ENCODE measurements at regions of chr5 and their contacts with region 1.

Region 1: DNA sequence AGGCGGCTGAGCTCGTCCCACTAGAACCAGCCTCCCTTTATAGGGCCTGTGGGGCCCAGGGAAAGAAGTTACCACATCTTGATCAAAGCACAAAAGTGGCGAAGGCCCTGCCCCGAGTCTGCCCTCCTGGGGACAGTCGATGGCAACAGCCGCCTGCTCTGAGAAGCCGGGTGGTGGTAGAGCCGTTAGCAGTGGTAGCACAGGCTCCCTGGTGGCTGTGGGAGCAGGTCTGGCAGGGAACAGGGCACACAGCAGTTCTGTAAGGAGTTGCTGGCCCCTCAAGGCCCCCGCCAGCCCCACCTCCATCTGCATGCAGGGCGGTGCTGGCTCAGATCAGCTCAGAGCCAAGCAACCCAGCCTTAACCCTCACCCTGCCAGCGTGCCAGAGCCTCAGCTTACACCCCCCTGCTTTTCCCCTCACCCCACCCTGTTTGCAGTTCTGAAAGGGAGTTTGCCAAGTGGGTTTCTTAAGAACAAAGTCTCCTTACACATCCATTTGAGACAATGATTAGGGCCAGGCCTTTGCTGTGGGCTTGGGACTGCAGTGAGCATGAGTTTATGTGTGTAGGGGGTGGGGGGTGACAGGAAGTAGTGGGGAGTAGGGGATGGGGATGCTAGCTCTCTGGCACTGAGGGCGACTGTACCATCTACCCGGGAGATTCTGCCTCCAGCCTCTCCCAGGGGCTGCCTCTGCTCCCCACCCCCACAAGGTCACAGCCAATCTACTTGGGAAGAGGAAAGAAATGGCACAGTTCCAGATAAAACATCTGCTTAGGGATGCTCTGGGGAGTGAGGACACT is 11.8 kb downstream of the ACSL6 start:
- DNase-seq: no peak
- ATAC-seq: no peak
- H3K4me3 ChIP-seq: no peak overlapping the region
- H3K27ac ChIP-seq: no peak overlapping the region
- H3K4me1 ChIP-seq: no peaks in the 10 kb centered on the region
- H3K27me3 ChIP-seq: no peaks in the 10 kb centered on the region
- CTCF ChIP-seq: no peak

Region 2: DNA sequence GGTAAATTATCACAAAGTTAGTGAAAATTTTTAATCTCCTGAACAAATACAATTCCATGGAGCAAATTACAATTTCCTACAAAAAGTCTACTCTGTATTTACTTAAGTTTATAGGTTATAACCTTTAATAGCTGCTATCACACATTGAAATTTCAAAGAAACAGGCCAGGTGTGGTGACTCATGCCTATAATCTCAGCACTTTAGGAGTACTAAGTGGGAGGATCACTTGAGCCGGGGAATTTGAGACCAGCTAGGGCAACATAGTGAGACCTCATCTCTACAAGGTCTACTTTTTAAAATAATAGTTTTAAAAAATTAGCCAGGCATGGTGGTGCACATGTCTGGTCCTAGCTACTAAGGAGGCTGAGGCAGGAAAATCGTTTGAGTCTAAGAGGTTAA is 884.9 kb before region 1 on chr5:
- intact Hi-C with region 1: no loop called
- DNase-seq: no peak
- ATAC-seq: peak; percentile 50
- H3K4me3 ChIP-seq: no peak overlapping the region
- H3K27ac ChIP-seq: no peak overlapping the region
- H3K4me1 ChIP-seq: peaks cover 0 to 3% of the 10 kb centered on the region in 2 donors
- H3K27me3 ChIP-seq: no peaks in the 10 kb centered on the region
- CTCF ChIP-seq: no peak

Region 3: DNA sequence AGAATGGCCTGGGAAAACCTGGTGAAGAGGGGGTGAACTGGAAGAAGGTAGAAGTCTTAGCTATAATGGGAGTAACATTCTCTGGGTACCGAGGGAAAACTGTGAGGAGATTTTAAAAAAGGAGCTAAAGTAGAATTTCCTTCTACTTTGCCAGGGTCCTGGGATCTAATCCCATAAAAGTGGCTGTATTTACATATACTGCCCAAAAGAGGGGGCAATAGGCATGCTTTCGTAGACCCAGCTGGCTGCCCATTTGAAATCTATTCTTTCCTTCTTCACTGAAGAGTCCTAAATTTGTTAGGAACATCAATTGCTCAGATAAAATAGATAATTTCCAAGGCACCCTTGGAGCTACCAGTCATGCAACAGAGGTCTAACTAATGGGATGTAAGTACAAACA is 576.6 kb before region 1 on chr5:
- intact Hi-C with region 1: loop called in 1 of 2 experiments (anchors 10 kb)
- DNase-seq: peak in 1 of 4 donors; percentile 5
- ATAC-seq: peak; percentile 68
- H3K4me3 ChIP-seq: no peak overlapping the region
- H3K27ac ChIP-seq: no peak overlapping the region
- H3K4me1 ChIP-seq: peaks cover 0 to 4% of the 10 kb centered on the region in 2 donors
- H3K27me3 ChIP-seq: no peaks in the 10 kb centered on the region
- CTCF ChIP-seq: peak in 1 of 2 donors; percentile 31

Region 4: DNA sequence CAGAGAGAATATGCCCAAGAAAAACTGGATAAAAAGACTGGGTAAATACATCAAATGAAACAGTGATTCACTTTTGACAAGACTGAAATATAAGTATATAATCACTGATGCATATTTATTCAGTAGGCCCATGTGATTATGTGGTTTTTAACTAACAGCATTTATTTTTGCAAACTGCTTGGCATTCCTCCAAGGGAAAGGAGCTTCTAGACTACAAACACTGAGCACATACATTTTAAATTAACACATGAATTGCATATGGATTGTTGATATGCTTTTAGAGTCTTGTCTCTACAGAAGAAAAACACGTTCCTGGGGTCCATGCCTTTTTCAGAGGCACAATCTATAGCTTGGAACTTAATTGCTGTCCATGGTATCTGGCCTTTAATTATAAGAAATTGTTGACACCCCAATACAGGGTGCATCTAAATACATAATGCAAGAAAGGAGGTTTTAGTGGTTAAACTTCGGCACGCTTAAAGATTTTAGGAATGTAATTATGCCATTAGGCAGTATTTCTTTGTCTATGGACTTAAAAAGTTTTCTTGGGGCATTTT is 47.3 kb before region 1 on chr5:
- intact Hi-C with region 1: no loop called
- DNase-seq: peak in 2 of 4 donors; percentile 6 to 8
- ATAC-seq: no peak
- H3K4me3 ChIP-seq: no peak overlapping the region
- H3K27ac ChIP-seq: no peak overlapping the region
- H3K4me1 ChIP-seq: no peaks in the 10 kb centered on the region
- H3K27me3 ChIP-seq: no peaks in the 10 kb centered on the region
- CTCF ChIP-seq: no peak

Region 5: GRCh38 chr5:132114150-132115121 is 114.8 kb after region 1 on chr5:
- intact Hi-C with region 1: no loop called
- DNase-seq: no peak
- ATAC-seq: no peak
- H3K4me3 ChIP-seq: no peak overlapping the region
- H3K27ac ChIP-seq: no peak overlapping the region
- H3K4me1 ChIP-seq: no peaks in the 10 kb centered on the region
- H3K27me3 ChIP-seq: peaks cover 0 to 5% of the 10 kb centered on the region in 2 donors
- CTCF ChIP-seq: no peak

Measured in left lung (tissue), 14 donors.